Psoas muscle (tissue), 8 donors: ENCODE measurements at regions of chr19 and their contacts with region 1.

Region 1: GRCh38 chr19:10332955-10333757 is at the start of gene RAVER1:
- DNase-seq: peak; percentile 98 to 99
- ATAC-seq: peak; percentile 94 to 96 (median 95)
- H3K4me3 ChIP-seq: peak within 1 kb of the TSS; percentile 69
- H3K27ac ChIP-seq: peak within 1 kb of the TSS; percentile 84
- H3K4me1 ChIP-seq: peaks cover 12% of the 10 kb centered on the region
- H3K27me3 ChIP-seq: no peaks in the 10 kb centered on the region
- CTCF ChIP-seq: no peak
- total RNA-seq, gene RAVER1: 7.9 to 11.2 (median 9.9) TPM

Region 2: GRCh38 chr19:9834726-9835506 is 498.2 kb before region 1 on chr19 and contains the start of gene PIN1:
- intact Hi-C with region 1: loop called in 1 of 2 experiments (anchors 10 kb)
- DNase-seq: peak; percentile 99
- ATAC-seq: peak; percentile 99 to 100 (median 99)
- H3K4me3 ChIP-seq: peak within 1 kb of the TSS; percentile 96
- H3K27ac ChIP-seq: peak within 1 kb of the TSS; percentile 80
- H3K4me1 ChIP-seq: peaks cover 12% of the 10 kb centered on the region
- H3K27me3 ChIP-seq: no peaks in the 10 kb centered on the region
- CTCF ChIP-seq: peak; percentile 64
- total RNA-seq, gene PIN1: 49.6 to 64.4 (median 56.9) TPM

Region 3: DNA sequence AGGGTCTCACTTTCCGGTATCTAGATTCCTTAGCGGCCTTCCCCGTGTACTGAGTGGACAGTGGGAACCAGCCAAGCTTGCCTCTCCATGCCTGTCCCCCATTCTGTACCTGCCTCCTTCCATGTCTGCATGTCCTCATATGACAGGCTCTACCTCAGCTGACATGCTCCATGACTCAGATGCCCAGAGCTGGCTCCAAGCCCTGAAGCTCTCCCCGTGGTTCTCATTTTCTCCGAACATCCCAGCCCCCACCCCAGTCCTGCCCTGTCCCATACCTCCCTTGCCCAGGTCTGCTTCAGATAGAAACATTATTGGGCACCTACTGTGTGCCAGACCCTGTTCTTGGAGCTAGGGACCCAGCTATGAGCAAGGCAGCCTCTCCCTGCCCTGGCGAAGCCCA is 264.1 kb before region 1 on chr19:
- intact Hi-C with region 1: no loop called
- DNase-seq: peak in 1 of 2 donors; percentile 21
- ATAC-seq: no peak
- H3K4me3 ChIP-seq: no peak overlapping the region
- H3K27ac ChIP-seq: no peak overlapping the region
- H3K4me1 ChIP-seq: no peaks in the 10 kb centered on the region
- H3K27me3 ChIP-seq: peaks cover 0 to 7% (median 0%) of the 10 kb centered on the region in 3 donors
- CTCF ChIP-seq: no peak

Region 4: GRCh38 chr19:10269333-10270179 is 63.6 kb before region 1 on chr19:
- intact Hi-C with region 1: loop called in 1 of 2 experiments (anchors 5 kb)
- DNase-seq: peak; percentile 86 to 90
- ATAC-seq: peak; percentile 75 to 89 (median 82)
- H3K4me3 ChIP-seq: peak overlapping the region; percentile 66
- H3K27ac ChIP-seq: peak overlapping the region; percentile 72
- H3K4me1 ChIP-seq: peaks cover 16% of the 10 kb centered on the region
- H3K27me3 ChIP-seq: peaks cover 0 to 22% (median 1%) of the 10 kb centered on the region in 3 donors
- CTCF ChIP-seq: peak; percentile 90

Region 5: GRCh38 chr19:10380313-10381102 is 47.4 kb after region 1 on chr19 and contains the start of gene TYK2:
- intact Hi-C with region 1: loop called in 1 of 2 experiments (anchors 5 kb)
- DNase-seq: peak; percentile 95 to 98
- ATAC-seq: peak; percentile 98 to 100 (median 99)
- H3K4me3 ChIP-seq: peak within 1 kb of the TSS; percentile 85
- H3K27ac ChIP-seq: peak within 1 kb of the TSS; percentile 80
- H3K4me1 ChIP-seq: peaks cover 6% of the 10 kb centered on the region
- H3K27me3 ChIP-seq: no peaks in the 10 kb centered on the region
- CTCF ChIP-seq: no peak
- total RNA-seq, gene TYK2: 37.1 to 57.6 (median 40.4) TPM